Stomach (tissue), 19 donors: ENCODE measurements at regions of chr11 and their contacts with region 1.

Region 1: GRCh38 chr11:129117595-129118350 is 74.4 kb downstream of the ARHGAP32 start:
- DNase-seq: peak; percentile 29 to 88
- H3K4me3 ChIP-seq: no peak overlapping the region
- H3K27ac ChIP-seq: no peak overlapping the region
- H3K4me1 ChIP-seq: peaks cover 0 to 15% (median 6%) of the 10 kb centered on the region in 4 donors
- H3K27me3 ChIP-seq: no peaks in the 10 kb centered on the region
- CTCF ChIP-seq: peak in 5 of 7 experiments; percentile 63 to 79 (median 78)
- EP300 ChIP-seq: no peak
- POLR2A ChIP-seq: no peak

Region 2: GRCh38 chr11:129331871-129332274 is 214.1 kb after region 1 on chr11:
- intact Hi-C with region 1: loop called (anchors 5 kb)
- DNase-seq: peak; percentile 91 to 92
- H3K4me3 ChIP-seq: no peak overlapping the region
- H3K27ac ChIP-seq: no peak overlapping the region
- H3K4me1 ChIP-seq: peaks cover 0 to 10% (median 3%) of the 10 kb centered on the region in 4 donors
- H3K27me3 ChIP-seq: no peaks in the 10 kb centered on the region
- CTCF ChIP-seq: peak in 5 of 7 experiments; percentile 64 to 87 (median 83)
- EP300 ChIP-seq: no peak
- POLR2A ChIP-seq: no peak